ENCODE measurements at regions of chr1 and their contacts with region 1.

Region 1: GRCh38 chr1:214123061-214123784 is 135.4 kb downstream of the PROX1 start:
- DNase-seq: peak; percentile 49 to 53
- ATAC-seq: peak; percentile 99

Region 2: DNA sequence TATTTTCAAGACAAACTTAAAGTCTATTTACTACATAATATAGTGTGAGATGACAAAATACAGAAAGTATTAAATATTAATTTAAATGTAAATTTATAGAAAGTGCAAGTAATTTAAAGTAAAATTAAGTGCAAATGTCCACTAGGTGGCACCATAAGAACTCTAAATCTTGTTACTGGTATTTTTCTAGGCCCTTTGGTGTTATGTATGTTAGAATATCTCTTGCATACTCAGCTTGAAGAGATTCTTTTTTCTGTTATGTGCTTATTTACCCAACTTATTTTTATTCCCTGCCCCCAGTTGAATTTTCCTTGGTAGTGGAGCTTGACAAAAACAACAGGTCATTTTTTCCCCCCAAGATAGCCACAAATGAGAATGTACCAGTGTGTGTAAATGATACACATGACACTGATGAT is 1000.7 kb before region 1 on chr1:
- intact Hi-C with region 1: loop called in 1 of 2 experiments (anchors 5 kb)
- DNase-seq: no peak
- ATAC-seq: no peak

Region 3: GRCh38 chr1:213244664-213245091 is 878.5 kb before region 1 on chr1:
- intact Hi-C with region 1: loop called in 1 of 2 experiments (anchors 5 kb)
- DNase-seq: no peak
- ATAC-seq: peak; percentile 40

Region 4: DNA sequence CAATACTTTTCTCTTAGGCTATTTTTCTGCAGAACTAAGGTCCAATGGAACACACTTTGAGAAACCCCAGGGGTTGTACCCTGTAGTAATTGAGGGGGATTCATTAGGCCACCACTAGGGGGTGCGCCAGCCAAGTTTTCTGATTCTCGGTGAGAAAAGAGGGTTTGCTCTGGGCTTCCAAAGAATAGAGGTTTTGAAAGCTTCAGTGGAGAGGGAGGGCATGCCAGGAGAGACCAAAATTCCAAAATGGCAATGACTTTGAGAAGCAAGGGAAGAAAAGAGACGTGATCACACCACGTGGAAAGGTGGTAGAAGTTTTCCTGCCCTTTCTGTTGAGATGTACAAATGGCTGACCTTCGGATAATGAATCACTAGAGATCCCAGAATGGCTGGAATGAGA is 748.9 kb before region 1 on chr1:
- intact Hi-C with region 1: loop called in 1 of 2 experiments (anchors 5 kb)
- DNase-seq: peak in 1 of 2 donors; percentile 57
- ATAC-seq: peak; percentile 64